Activated T-helper 1 cell treated with anti-CD3 and anti-CD28 coated beads, Interleukin-12 subunit alpha, Interleukin-12 subunit beta, Interleukin-2, Interleukin-4 antibody, amounts not matched to agents 30 ng/mL and 10 ng/mL and 1 ng/mL, durations not matched to agents 14 hours and 24 hours and 36 hours (primary cell): ENCODE measurements at regions of chr3 and their contacts with region 1.

Region 1: DNA sequence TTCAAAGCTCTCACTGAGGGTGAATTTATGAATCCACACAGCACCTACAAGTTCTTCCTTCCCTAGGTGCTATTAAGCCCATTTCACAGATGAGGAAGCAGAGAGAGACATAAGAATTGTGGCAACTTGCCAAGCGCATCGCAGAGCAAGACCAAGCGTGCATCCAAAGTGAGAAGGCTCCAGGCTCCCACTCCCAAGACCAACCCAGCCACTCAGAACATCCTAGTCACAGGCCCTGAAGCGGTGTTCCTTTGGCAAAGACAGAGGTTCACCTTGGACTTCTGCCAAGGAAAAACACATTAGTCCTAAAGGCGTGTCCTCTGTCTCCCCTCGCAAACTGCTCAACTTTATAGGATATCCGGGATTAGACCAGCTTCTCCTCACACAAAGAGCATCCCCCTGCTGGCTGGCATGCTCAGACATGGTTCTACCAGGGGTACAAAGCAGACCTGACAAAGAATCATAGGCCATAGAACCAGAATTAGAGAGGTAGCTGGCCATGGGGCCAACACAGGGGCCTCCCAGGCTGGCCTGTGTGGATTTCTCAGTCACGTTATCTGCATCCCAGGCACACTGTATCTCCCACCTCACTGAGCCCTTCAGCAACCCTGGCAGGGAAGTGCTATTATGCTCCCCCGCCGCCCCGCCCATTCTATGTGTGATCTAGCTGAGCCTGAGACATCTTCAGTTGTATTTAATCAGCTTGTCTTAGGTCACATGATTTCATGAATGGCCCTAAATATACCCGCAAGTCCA is 160.2 kb downstream of the FOXP1 start:
- DNase-seq: no peak
- H3K4me3 Mint-ChIP-seq: no peak overlapping the region
- H3K27ac Mint-ChIP-seq: no peak overlapping the region
- H3K4me1 Mint-ChIP-seq: peaks cover 22% of the 10 kb centered on the region
- H3K27me3 Mint-ChIP-seq: peaks cover 61% of the 10 kb centered on the region

Region 2: GRCh38 chr3:71380096-71380495 is 43.2 kb before region 1 on chr3:
- intact Hi-C with region 1: loop called (anchors 5 kb)
- DNase-seq: no peak
- H3K4me3 Mint-ChIP-seq: no peak overlapping the region
- H3K27ac Mint-ChIP-seq: no peak overlapping the region
- H3K4me1 Mint-ChIP-seq: peaks cover 26% of the 10 kb centered on the region
- H3K27me3 Mint-ChIP-seq: peaks cover 21% of the 10 kb centered on the region

Region 3: DNA sequence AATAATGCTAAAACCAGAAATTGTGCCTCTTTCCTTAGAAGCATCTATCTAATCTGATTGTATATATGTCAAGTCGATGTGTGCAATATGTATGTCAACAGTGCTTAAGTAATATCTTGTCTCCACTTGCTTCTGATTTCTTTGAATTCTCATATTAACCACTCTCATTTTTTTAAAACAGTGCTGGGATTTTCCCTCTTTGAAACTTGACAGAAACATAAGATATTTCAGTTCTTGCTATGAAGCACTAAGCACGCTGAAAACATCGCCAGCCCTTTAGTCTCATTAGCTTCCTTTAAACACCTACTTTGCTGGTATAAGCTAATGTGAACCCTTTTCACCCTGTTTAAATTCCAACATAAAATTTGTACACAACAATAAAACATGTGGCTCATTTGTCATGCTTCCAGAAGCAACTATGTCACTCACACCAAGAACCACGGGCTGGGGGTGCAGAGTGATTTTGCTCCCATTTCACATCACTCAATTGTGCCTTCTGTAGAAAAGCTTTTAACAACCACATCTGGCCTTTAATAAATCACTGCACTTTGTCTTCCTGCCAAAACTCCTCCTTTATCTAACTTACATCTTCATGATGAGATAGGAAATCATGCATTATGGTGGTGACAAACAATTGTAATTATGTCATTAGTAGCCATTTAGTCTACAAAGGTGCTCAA is 25.0 kb before region 1 on chr3:
- intact Hi-C with region 1: loop called (anchors 1 kb)
- DNase-seq: no peak
- H3K4me3 Mint-ChIP-seq: no peak overlapping the region
- H3K27ac Mint-ChIP-seq: no peak overlapping the region
- H3K4me1 Mint-ChIP-seq: peaks cover 17% of the 10 kb centered on the region
- H3K27me3 Mint-ChIP-seq: peaks cover 43% of the 10 kb centered on the region

Region 4: DNA sequence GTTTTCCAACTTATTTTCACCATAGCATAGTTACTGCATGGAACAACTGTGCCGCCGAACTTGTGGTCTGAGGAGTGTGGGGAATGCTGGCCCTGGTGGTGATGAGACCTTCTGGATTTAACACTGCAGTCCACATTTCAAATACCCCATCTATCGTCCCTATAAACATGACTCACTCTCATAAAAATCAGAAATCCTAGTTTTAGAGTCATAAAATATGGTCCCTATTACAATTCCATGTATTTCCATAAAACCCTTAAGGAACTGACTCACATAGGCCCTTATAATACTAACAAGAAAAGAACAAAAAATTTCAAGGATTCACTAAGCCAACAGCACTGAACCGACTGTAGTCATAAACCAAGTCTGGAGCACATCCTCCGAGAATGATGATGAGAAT is 13.0 kb after region 1 on chr3:
- intact Hi-C with region 1: no loop called
- DNase-seq: no peak
- H3K4me3 Mint-ChIP-seq: no peak overlapping the region
- H3K27ac Mint-ChIP-seq: no peak overlapping the region
- H3K4me1 Mint-ChIP-seq: peaks cover 24% of the 10 kb centered on the region
- H3K27me3 Mint-ChIP-seq: peaks cover 25% of the 10 kb centered on the region

Region 5: DNA sequence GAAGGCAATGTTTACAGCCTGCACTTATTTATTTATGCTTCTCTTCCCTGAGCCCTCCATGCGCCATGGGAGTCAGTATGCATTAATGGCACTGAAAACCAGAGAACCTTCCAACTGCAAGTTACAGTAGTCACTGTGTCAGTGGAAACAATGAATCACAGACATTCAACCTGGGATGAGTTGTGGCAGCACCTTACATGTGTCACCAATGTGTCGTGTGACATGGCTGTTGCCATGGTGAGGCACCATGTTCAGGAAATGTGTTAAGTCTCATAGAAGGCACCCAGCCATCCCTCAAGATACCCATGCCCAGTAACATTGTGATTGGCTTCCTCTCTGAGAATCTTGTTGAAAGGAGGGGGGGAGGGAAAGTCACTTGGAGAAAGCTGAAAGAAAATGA is 55.2 kb after region 1 on chr3:
- intact Hi-C with region 1: loop called (anchors 1 kb)
- DNase-seq: no peak
- H3K4me3 Mint-ChIP-seq: no peak overlapping the region
- H3K27ac Mint-ChIP-seq: peak overlapping the region; percentile 58
- H3K4me1 Mint-ChIP-seq: peaks cover 23% of the 10 kb centered on the region
- H3K27me3 Mint-ChIP-seq: peaks cover 4% of the 10 kb centered on the region